Activated CD4-positive, alpha-beta T cell treated with anti-CD3 and anti-CD28 coated beads, Interleukin-2, amount 10 ng/mL, durations not matched to agents 7 days and 5 days (primary cell): ENCODE measurements at regions of chr16 and their contacts with region 1.

Region 1: DNA sequence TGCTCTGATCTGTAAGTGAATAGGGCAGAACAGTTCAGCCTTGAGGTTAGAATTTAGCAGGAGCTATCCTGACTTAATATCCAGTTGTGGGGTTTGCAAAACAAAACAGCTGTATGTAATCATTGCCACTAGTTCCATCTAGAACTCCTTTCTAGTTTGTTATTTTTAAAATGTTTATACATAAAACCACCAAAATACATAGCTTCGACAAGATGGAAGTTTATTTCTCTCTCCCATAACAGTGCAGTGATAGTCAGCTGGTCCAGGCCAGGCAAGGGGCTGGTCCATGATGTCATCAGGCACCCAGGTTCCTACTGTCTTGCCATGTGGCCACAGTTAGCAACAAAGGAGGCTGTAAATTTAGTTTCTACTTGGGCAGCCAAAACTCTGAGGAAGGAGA is 10.5 kb upstream of the PLK1 start:
- DNase-seq: no peak
- H3K4me3 Mint-ChIP-seq: no peak overlapping the region
- H3K27ac Mint-ChIP-seq: no peak overlapping the region
- H3K4me1 Mint-ChIP-seq: peaks cover 26% of the 10 kb centered on the region
- H3K27me3 Mint-ChIP-seq: no peaks in the 10 kb centered on the region

Region 2: GRCh38 chr16:23678430-23679273 is 10.4 kb after region 1 on chr16 and contains the start of gene PLK1:
- CTCF ChIA-PET with region 1: interaction called, 11 read pairs
- POLR2A ChIA-PET with region 1: no interaction called
- DNase-seq: peak; percentile 91
- H3K4me3 Mint-ChIP-seq: peak within 1 kb of the TSS; percentile 97
- H3K27ac Mint-ChIP-seq: peak within 1 kb of the TSS; percentile 91
- H3K4me1 Mint-ChIP-seq: peaks cover 47% of the 10 kb centered on the region
- H3K27me3 Mint-ChIP-seq: no peaks in the 10 kb centered on the region
- total RNA-seq, gene PLK1: 121 to 134 TPM

Region 3: GRCh38 chr16:23858542-23858941 is 190.3 kb after region 1 on chr16:
- CTCF ChIA-PET with region 1: no interaction called
- POLR2A ChIA-PET with region 1: no interaction called
- DNase-seq: no peak
- H3K4me3 Mint-ChIP-seq: no peak overlapping the region
- H3K27ac Mint-ChIP-seq: no peak overlapping the region
- H3K4me1 Mint-ChIP-seq: peaks cover 75% of the 10 kb centered on the region
- H3K27me3 Mint-ChIP-seq: no peaks in the 10 kb centered on the region